Gastrocnemius medialis (tissue), 4 donors: ENCODE measurements at regions of chr4 and their contacts with region 1.

Region 1: DNA sequence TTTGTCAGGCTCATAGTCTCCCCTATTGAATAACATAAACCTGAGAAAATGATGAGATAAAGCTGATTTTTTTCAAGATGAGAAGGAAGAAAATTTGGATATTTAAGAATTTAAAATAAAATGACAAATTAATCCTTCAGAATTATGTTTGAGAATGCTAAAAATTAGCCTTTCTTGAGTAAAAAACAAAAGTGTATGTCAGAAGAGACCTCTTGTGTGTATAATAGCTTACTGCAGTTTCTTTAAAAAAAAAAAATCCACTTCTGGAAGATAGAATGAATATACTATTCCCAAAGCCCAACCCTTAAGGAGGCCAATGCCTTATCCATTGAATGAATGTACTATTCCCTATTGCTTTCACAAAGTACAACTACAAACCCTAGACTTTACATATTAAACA is 281.8 kb downstream of the RAPGEF2 start:
- DNase-seq: no peak
- ATAC-seq: no peak
- H3K4me3 ChIP-seq: no peak overlapping the region
- H3K27ac ChIP-seq: no peak overlapping the region
- H3K4me1 ChIP-seq: no peaks in the 10 kb centered on the region
- H3K27me3 ChIP-seq: no peaks in the 10 kb centered on the region
- CTCF ChIP-seq: no peak
- POLR2A ChIP-seq: no peak

Region 2: DNA sequence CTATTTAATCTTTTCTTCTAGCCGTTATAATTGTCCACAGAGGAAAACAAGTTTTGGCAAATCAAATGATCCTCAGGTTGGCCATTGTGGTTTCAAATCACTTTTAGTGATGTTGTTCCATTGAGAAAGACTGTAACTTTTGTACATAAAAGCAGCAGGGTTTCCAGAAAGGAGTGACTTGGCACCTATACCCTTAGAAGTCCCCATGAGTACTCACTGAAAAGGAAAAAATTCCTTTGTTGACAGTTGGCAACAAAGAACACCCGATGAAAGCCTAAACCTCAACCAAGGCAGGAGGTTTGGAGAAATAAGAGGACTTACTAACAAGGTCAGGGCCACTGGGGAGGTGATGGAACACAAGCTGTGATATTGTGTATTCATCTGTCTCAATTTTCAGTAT is 192.6 kb after region 1 on chr4:
- in situ Hi-C with region 1: no loop called
- intact Hi-C with region 1: loop called (anchors 10 kb)
- DNase-seq: no peak
- ATAC-seq: no peak
- H3K4me3 ChIP-seq: no peak overlapping the region
- H3K27ac ChIP-seq: no peak overlapping the region
- H3K4me1 ChIP-seq: no peaks in the 10 kb centered on the region
- H3K27me3 ChIP-seq: no peaks in the 10 kb centered on the region
- CTCF ChIP-seq: no peak
- POLR2A ChIP-seq: no peak